ENCODE measurements at regions of chr2 and their contacts with region 1.

Region 1: GRCh38 chr2:160109936-160110673 is 47.7 kb upstream of the PLA2R1 start:
- DNase-seq: peak in 6 of 10 donors; percentile 35 to 93 (median 43)

Region 2: DNA sequence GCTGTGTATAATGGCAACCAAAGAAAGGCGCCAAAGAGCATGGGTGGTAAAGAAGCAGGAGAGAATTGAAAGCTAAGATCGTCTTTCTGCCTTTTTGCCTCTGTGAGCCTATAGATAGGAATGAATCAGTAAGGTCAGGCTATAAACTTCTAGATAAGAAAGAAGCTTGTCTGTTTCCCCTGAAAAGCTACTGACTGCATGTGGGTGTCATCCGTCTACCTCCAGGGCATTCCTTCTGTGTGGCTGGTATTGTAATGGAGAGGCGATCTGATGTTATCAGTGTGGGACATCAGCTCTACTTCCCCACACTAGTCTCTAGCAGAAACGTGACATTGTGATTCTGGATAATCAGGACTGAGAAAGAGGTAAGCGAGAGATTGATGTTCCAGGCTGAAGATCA is 15.7 kb after region 1 on chr2:
- intact Hi-C with region 1: no loop called
- DNase-seq: no peak

Region 3: DNA sequence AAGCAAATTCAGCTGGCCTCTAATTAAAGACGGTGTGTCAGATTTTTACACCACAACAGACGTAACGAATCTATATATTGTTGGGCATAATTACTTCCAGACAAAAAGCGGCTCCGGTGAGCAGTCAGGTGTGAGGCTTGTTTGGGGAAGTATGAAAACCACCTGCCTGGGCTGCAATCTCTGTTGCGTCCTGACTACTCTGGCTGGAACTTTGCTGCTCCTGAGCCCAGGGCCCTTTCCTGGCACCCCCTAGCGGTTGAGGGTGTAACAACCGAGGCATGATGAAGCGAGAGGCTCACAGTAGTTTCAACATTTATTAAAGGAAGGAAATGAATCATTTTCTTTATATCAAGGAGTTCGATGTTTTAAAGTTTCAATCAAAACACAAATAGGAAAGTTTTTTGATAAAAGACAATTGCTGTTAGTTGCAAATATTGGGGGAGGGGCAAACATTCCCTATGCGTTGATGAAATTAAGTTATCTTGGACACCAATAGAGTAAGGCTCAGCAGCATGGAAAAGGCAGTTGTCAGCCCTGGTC is 100.6 kb after region 1 on chr2:
- intact Hi-C with region 1: loop called (anchors 5 kb)
- DNase-seq: peak in 5 of 10 donors; percentile 40 to 75 (median 63)